Posterior vena cava (tissue), 2 donors: ENCODE measurements at regions of chr18 and their contacts with region 1.

Region 1: DNA sequence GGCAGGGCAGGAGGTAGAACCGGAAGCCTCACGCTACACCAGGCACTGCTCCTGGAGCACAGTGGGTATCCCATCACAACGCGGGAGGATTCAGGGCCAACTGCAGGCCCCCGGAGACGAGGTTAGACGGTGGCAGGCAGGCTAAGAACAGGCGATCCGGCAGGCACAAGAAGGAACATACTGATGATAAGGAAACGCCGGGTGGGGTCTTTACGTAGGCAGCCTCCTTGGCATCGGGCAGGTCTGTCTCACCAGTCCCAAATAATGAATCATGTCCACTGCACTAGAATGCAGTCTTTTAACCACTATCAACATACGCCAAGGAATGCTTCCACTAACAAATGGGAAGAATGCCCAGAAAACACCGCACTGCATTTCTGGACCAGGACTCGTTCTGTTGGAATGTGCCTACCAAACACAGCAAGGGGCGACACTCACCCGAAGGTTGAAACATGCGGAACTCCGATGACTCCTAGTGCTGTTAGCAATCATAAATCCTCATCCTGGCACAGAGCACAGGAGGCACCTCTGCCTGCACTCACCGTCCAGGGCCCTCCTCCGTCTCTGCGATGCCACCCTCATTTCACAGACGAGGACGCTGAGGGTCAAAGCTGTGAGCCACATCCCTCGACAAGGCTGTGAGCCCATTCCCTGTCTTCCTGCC is 35.2 kb downstream of the ZNF516 start:
- DNase-seq: no peak

Region 2: DNA sequence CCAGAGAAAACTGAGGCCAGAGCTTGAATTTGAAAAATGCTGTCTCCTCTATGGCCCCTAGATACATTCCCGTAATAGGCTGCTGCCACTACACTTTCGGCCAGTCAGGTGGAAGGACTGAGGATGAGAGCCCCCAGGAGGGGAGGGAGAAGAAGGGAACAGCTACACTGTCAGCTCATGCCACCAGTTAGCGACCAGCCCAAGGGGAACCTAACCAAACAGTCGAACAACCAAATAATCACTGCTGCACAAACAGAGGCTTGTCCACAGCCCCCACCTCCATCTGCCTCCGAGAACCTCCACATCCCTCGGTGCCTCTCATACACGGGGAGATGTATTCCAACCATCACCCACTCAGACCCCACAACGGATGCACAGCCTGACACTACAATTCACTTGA is 28.0 kb after region 1 on chr18:
- intact Hi-C with region 1: loop called in 1 of 2 experiments (anchors 2 kb)
- DNase-seq: no peak

Region 3: GRCh38 chr18:76721207-76721996 is 261.6 kb after region 1 on chr18:
- intact Hi-C with region 1: no loop called
- DNase-seq: no peak